IMR-90 (cell line): ENCODE measurements at regions of chr18 and their contacts with region 1.

Region 1: DNA sequence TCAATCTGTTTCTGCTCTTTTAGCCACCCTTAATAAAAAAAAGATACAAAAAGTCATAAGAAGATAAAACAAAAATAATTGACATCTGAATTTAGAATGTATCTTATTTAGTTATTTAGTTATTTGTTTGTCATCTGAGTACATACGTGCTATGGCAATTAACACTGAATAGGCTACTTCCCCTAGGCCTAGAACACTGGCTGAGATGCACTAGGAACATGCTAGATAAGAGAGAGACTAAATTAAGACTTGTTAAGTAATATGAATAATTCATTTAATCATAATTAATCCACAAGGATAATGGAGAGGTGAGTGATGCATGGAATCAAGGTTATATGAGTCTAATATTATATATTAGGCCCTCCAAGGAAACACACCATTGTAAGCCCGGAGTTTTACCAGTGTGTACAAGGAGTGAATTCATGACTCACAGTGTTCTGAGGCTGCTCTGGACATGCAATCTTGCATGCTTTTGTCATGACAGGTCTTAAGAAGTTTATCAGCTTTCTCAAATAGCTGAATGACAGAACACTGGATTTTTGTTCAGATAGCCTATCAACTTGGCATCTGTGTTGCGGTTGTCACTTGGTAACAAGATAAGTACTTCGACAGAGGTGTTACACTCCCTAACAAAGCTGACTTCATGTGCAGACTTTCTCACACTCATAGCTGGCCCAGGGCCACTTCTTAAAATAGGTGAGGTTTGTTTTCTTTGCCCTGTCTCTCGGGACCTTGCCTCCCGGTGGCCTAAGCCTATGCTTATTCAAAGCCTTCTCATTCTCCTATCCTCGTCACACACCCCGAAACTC is 5.0 kb upstream of the SERPINB2 start:
- DNase-seq: peak; percentile 97
- ATAC-seq: peak; percentile 92
- H3K4me3 ChIP-seq: no peak overlapping the region
- H3K27ac ChIP-seq: no peak overlapping the region
- H3K4me1 ChIP-seq: no peaks in the 10 kb centered on the region; the same call in 1 of the 2 replicates
- H3K27me3 ChIP-seq: no peaks in the 10 kb centered on the region
- CTCF ChIP-seq: no peak
- POLR2A ChIP-seq: no peak
- RAD21 ChIP-seq: no peak

Region 2: DNA sequence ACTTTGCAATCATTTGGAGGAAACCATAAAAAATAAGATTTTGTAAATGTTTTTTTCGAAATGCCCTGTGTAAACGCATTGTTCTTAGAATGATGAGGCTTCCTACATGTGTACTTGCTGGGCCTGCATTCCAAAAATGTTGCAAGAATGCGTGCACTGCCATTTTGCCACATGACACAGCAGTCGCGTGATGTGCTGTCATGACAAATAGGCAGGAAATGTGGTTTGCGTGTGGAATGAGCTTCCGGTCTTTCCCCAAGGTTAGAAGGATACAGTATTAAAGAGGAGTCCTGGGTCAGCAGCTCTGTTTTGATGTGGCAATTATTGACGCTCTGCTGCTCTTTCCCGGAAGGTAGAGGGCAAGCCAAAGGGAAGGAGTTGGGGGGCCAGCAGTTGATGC is 13.2 kb before region 1 on chr18:
- CTCF ChIA-PET with region 1: no interaction called
- POLR2A ChIA-PET with region 1: interaction called, 11 read pairs
- dilution Hi-C with region 1: no loop called
- in situ Hi-C with region 1: no loop called
- intact Hi-C with region 1: no loop called
- DNase-seq: peak; percentile 91
- ATAC-seq: peak; percentile 68
- H3K4me3 ChIP-seq: no peak overlapping the region
- H3K27ac ChIP-seq: peak overlapping the region; percentile 42
- H3K4me1 ChIP-seq: no peaks in the 10 kb centered on the region
- H3K27me3 ChIP-seq: no peaks in the 10 kb centered on the region
- CTCF ChIP-seq: no peak
- POLR2A ChIP-seq: no peak
- RAD21 ChIP-seq: no peak

Region 3: DNA sequence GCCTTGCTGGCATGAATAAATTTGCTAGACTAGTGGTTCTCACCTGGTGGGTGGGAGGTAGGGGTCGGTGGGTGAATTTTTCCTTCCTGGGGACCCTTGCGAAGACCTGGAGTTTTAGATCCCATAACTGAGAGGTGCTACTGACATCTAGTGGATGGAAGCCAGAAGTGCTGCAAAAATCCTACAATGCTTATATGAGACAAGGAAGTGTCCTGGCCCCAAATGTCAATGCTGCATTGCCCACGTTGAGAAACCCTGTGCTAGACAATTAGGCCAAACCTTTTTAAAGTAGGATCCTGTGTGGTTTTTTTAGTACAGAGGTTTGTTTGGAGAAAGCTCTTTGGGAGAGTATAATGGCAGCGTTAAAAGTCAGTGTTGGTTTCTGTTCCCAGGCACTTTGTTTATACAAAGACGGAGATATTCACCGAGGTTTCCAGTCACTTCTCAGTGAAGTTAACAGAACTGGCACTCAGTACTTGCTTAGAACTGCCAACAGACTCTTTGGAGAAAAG is 96.9 kb after region 1 on chr18:
- CTCF ChIA-PET with region 1: no interaction called
- POLR2A ChIA-PET with region 1: no interaction called
- dilution Hi-C with region 1: no loop called
- in situ Hi-C with region 1: no loop called
- intact Hi-C with region 1: loop called (anchors 5 kb)
- DNase-seq: peak; percentile 70
- ATAC-seq: peak; percentile 92
- H3K4me3 ChIP-seq: peak overlapping the region; percentile 37; the same call in 1 of the 2 replicates
- H3K27ac ChIP-seq: peak overlapping the region; percentile 68
- H3K4me1 ChIP-seq: 0 out of 2 replicates have a peak, but pooled peaks cover 2% of the 10 kb centered on the region
- H3K27me3 ChIP-seq: no peaks in the 10 kb centered on the region
- CTCF ChIP-seq: peak; percentile 86
- POLR2A ChIP-seq: no peak
- RAD21 ChIP-seq: peak; percentile 59